Activated CD4-positive, alpha-beta memory T cell treated with anti-CD3 and anti-CD28 coated beads, Interleukin-2, amount 10 ng/mL, durations not matched to agents 7 days and 5 days (primary cell): ENCODE measurements at regions of chr2 and their contacts with region 1.

Region 1: GRCh38 chr2:234288974-234289455 is 207.9 kb downstream of the ARL4C start:
- DNase-seq: peak; percentile 83
- H3K4me3 Mint-ChIP-seq: peak overlapping the region; percentile 47
- H3K27ac Mint-ChIP-seq: peak overlapping the region; percentile 100
- H3K4me1 Mint-ChIP-seq: peaks cover 83% of the 10 kb centered on the region
- H3K27me3 Mint-ChIP-seq: no peaks in the 10 kb centered on the region

Region 2: GRCh38 chr2:234278556-234279255 is 10.3 kb before region 1 on chr2:
- CTCF ChIA-PET with region 1: interaction called, 32 read pairs
- POLR2A ChIA-PET with region 1: interaction called, 69 read pairs
- DNase-seq: peak; percentile 39
- H3K4me3 Mint-ChIP-seq: no peak overlapping the region
- H3K27ac Mint-ChIP-seq: peak overlapping the region; percentile 89
- H3K4me1 Mint-ChIP-seq: peaks cover 79% of the 10 kb centered on the region
- H3K27me3 Mint-ChIP-seq: no peaks in the 10 kb centered on the region

Region 3: GRCh38 chr2:234324116-234324515 is 35.1 kb after region 1 on chr2:
- CTCF ChIA-PET with region 1: interaction called, 4 read pairs
- POLR2A ChIA-PET with region 1: interaction called, 13 read pairs
- DNase-seq: no peak
- H3K4me3 Mint-ChIP-seq: no peak overlapping the region
- H3K27ac Mint-ChIP-seq: peak overlapping the region; percentile 58
- H3K4me1 Mint-ChIP-seq: peaks cover 48% of the 10 kb centered on the region
- H3K27me3 Mint-ChIP-seq: no peaks in the 10 kb centered on the region

Region 4: DNA sequence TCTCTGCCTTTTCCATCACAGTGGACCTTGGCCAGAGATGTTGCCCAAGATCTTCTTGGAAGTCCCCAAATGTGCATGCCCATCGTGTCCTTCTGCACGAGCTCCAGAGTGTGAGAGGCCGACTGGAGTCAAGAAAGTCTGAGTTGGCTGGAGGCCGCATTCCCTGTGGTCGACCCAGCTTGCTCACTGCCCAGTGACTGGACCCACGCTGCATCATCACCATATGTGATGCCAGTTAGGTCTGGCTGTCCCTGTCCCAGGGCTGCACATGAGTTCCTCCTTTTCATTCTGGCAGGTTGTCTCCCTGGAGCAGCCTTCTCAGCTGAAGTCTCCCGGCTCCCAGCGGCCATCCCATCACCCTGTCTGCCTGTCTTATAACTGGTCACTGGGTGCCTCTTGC is 114.1 kb after region 1 on chr2:
- CTCF ChIA-PET with region 1: interaction called, 3 read pairs
- POLR2A ChIA-PET with region 1: interaction called, 12 read pairs
- DNase-seq: no peak
- H3K4me3 Mint-ChIP-seq: no peak overlapping the region
- H3K27ac Mint-ChIP-seq: peak overlapping the region; percentile 6
- H3K4me1 Mint-ChIP-seq: peaks cover 73% of the 10 kb centered on the region
- H3K27me3 Mint-ChIP-seq: no peaks in the 10 kb centered on the region

Region 5: GRCh38 chr2:234451852-234452625 is 163.0 kb after region 1 on chr2:
- CTCF ChIA-PET with region 1: interaction called, 79 read pairs
- POLR2A ChIA-PET with region 1: interaction called, 196 read pairs
- DNase-seq: no peak
- H3K4me3 Mint-ChIP-seq: peak overlapping the region; percentile 72
- H3K27ac Mint-ChIP-seq: peak overlapping the region; percentile 81
- H3K4me1 Mint-ChIP-seq: peaks cover 83% of the 10 kb centered on the region
- H3K27me3 Mint-ChIP-seq: no peaks in the 10 kb centered on the region

Region 6: GRCh38 chr2:234483568-234484251 is 194.7 kb after region 1 on chr2:
- CTCF ChIA-PET with region 1: interaction called, 37 read pairs
- POLR2A ChIA-PET with region 1: interaction called, 325 read pairs
- DNase-seq: peak; percentile 90
- H3K4me3 Mint-ChIP-seq: peak overlapping the region; percentile 59
- H3K27ac Mint-ChIP-seq: peak overlapping the region; percentile 88
- H3K4me1 Mint-ChIP-seq: peaks cover 93% of the 10 kb centered on the region
- H3K27me3 Mint-ChIP-seq: no peaks in the 10 kb centered on the region